ENCODE measurements at regions of chr9 and their contacts with region 1.

Region 1: DNA sequence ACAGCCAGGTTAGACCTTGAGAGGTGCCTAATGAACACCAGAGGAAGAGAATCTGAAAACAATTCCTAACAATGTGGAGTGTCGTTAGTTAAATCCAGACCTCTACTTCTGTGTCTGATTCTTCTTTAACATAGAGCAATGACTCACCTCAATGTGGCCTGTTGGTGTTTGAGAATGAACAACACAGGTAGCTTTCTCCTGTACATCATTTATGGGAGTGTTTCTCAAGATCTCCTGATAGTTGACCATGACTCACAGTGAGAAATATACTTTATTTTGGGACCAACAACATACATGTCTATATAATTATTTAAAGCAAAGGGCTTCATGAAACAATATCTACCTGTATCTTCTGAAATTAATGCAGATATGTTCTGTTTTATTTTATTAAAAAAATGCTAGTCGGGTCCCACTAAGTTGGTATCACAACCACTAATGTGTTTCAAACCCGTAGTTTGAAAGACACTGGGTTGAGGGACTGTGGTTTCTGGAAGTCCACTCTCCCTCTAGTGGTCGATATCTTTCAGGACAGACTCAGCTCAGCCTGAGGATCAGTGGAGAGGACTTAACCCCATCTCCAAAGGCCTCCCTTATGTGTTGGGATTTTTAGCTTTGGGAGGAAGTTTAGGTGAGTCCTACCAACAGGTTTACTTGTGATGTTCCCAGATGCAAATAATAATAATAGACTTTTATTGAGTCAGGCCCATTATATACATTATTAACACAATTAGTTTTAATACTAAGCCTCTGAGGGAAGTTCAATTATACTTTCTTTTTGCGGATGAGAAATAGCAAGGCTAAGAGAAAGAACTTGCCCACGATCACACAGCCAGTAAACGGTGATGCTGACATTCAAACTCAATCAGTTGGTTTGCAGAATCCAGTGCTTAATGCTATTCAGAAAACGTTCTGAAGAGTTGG is 70.0 kb upstream of the KLF9 start:
- DNase-seq: peak; percentile 83
- H3K27ac ChIP-seq: no peak overlapping the region
- CTCF ChIP-seq: no peak; the same call in 1 of the 2 replicates

Region 2: GRCh38 chr9:70451765-70452164 is 32.7 kb before region 1 on chr9:
- CTCF ChIA-PET with region 1: no interaction called
- POLR2A ChIA-PET with region 1: interaction called, 10 read pairs
- DNase-seq: no peak
- H3K27ac ChIP-seq: no peak overlapping the region
- CTCF ChIP-seq: no peak

Region 3: DNA sequence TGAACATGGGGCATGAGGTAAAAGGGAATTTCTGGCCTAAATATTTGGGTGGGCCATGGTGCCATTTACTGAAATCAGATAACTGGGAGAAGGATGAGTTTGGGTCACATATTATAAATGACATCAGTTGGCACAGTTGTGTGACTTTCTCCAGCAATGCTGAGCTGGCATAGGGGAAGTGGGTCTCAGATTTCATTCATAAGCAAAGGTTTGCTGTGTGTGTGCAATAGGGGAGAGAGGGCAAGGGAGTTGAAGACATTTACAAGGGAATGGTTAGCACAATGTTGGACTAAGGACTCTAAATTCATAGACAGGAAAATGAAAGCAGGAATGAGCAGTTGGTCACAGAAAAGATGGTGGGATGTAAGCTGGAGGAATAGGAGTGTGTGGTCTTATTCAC is 22.2 kb before region 1 on chr9:
- CTCF ChIA-PET with region 1: no interaction called
- POLR2A ChIA-PET with region 1: no interaction called
- DNase-seq: no peak
- H3K27ac ChIP-seq: no peak overlapping the region
- CTCF ChIP-seq: no peak

Measured in RWPE1 (cell line).